Heart left ventricle (tissue), 16 donors: ENCODE measurements at regions of chr19 and their contacts with region 1.

Region 1: GRCh38 chr19:9674663-9675357 is at the start of gene ZNF562:
- DNase-seq: peak; percentile 90 to 94 (median 92)
- ATAC-seq: peak; percentile 93 to 99 (median 98)
- H3K4me3 ChIP-seq: peak within 1 kb of the TSS; percentile 64 to 96 (median 84)
- H3K27ac ChIP-seq: peak within 1 kb of the TSS; percentile 84 to 99 (median 93)
- H3K4me1 ChIP-seq: peaks cover 0 to 12% (median 4%) of the 10 kb centered on the region in 12 donors
- H3K27me3 ChIP-seq: no peaks in the 10 kb centered on the region
- CTCF ChIP-seq: no peak
- POLR2A ChIP-seq: peak in 1 of 2 donors; percentile 48
- total RNA-seq, gene ZNF562: 13.5 to 24.1 (median 20.7) TPM

Region 2: GRCh38 chr19:9627856-9628255 is 47.0 kb before region 1 on chr19:
- intact Hi-C with region 1: loop called in 3 of 10 experiments (anchors 5 to 10 kb)
- DNase-seq: no peak
- ATAC-seq: no peak
- H3K4me3 ChIP-seq: no peak overlapping the region
- H3K27ac ChIP-seq: no peak overlapping the region
- H3K4me1 ChIP-seq: peaks cover 0 to 8% (median 0%) of the 10 kb centered on the region in 12 donors
- H3K27me3 ChIP-seq: no peaks in the 10 kb centered on the region
- CTCF ChIP-seq: no peak
- POLR2A ChIP-seq: no peak

Region 3: DNA sequence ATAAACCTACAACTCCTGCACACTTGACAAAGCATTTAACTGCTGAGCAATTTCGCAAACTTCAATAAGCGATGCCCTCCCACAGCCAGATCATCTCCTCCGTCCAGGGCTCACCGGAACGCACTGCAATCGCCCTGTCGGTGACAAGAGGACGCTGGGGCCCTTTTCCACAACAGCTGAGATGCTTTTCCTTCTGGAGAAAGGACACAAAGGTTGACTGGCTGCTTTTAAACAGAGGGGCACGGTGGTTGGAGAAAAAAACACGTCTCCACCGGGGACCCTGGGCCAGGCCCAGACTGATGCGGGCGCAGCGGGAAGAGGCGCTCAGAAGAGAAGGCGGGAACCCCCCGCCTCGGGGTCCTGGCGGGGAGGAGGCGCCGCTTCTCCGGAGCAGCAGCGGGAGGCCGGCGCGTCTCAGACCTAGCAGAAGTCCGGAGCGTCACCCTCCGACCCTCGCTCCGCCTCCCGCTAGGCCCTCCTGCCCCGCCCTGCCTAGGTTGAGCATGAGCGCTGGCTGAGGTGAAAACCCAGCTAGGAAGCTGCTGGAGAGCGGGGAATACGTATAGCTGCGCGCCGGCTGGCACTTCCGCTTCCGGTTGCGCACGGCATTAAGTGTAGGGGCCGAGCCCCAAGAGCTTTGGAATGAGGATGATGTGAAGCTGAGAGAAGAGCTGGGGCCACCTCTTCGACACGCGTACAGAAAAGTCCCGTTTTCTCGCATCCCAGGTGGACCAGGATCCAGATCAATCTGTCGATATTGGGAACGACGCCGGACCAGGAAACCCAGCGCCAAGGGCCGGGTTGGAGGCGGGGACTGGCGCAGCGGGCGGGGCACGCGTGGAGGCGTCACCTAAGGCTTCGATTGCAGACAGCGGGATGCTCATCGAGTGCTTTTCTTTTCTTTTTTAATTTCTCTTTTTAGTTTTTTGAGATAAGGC is 93.6 kb after region 1 on chr19 and contains the start of gene ZNF846:
- intact Hi-C with region 1: loop called in 5 of 10 experiments (anchors 1 to 5 kb)
- DNase-seq: peak; percentile 92 to 96 (median 95)
- ATAC-seq: peak; percentile 97 to 100 (median 99)
- H3K4me3 ChIP-seq: peak within 1 kb of the TSS; percentile 57 to 91 (median 78)
- H3K27ac ChIP-seq: peak within 1 kb of the TSS; percentile 89 to 98 (median 92)
- H3K4me1 ChIP-seq: peaks cover 0 to 20% (median 15%) of the 10 kb centered on the region in 12 donors
- H3K27me3 ChIP-seq: no peaks in the 10 kb centered on the region
- CTCF ChIP-seq: no peak
- POLR2A ChIP-seq: peak in 1 of 2 donors; percentile 62
- total RNA-seq, gene ZNF846: 6.5 to 11.0 (median 8.4) TPM

Region 4: DNA sequence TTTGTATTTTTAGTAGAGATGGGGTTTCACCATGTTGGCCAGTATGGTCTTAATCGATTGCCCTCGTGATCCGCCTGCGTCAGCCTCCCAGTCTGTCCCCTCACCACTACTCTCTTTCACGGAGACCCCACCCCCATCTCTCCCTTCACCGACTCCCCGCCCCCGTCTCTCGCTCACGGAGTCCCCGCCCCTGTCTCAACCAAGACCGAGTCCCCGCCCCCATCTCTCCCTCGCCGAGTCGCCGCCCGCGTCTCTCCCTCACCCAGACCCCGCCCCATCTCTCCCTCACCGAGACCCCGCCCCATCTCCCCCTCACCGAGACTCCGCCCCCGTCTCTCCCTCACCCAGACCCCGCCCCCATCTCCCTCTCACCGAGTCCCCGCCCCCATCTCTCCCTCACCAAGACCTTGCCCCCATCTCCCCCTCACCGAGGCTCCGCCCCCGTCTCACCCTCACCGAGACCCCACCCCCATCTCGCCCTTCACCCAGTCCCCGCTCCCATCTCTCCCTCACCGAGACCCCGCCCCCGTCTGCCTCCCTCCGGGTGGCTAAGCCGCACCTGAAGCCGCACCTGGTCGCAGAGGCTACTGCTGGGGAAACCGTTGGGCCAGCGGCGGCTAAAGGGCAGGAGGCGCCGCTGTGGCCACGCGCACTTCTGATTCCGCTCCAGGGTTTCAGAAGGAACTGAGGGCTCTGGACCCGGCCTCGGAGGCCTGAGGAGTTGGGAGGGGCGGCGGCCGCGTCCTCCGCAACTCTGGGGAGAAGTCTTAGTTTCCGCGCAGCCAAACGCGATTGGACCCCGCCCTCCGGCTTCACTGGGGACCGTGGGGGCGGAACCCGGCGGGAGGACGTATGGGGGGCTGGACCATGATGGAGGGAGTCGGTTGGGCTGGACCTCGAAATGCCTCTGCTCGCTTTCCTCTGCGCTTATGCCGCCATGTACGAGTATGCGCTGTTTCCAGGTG is 110.8 kb after region 1 on chr19:
- intact Hi-C with region 1: loop called in 3 of 10 experiments (anchors 5 to 10 kb)
- DNase-seq: peak; percentile 98 to 99 (median 98)
- ATAC-seq: peak; percentile 92 to 96 (median 94)
- H3K4me3 ChIP-seq: peak overlapping the region; percentile 42 to 92 (median 66)
- H3K27ac ChIP-seq: peak overlapping the region; percentile 52 to 100 (median 96)
- H3K4me1 ChIP-seq: peaks cover 0 to 26% (median 11%) of the 10 kb centered on the region in 12 donors
- H3K27me3 ChIP-seq: no peaks in the 10 kb centered on the region
- CTCF ChIP-seq: no peak
- POLR2A ChIP-seq: peak in 1 of 2 donors; percentile 87